Common myeloid progenitor, CD34-positive (primary cell): ENCODE measurements at regions of chr3 and their contacts with region 1.

Region 1: DNA sequence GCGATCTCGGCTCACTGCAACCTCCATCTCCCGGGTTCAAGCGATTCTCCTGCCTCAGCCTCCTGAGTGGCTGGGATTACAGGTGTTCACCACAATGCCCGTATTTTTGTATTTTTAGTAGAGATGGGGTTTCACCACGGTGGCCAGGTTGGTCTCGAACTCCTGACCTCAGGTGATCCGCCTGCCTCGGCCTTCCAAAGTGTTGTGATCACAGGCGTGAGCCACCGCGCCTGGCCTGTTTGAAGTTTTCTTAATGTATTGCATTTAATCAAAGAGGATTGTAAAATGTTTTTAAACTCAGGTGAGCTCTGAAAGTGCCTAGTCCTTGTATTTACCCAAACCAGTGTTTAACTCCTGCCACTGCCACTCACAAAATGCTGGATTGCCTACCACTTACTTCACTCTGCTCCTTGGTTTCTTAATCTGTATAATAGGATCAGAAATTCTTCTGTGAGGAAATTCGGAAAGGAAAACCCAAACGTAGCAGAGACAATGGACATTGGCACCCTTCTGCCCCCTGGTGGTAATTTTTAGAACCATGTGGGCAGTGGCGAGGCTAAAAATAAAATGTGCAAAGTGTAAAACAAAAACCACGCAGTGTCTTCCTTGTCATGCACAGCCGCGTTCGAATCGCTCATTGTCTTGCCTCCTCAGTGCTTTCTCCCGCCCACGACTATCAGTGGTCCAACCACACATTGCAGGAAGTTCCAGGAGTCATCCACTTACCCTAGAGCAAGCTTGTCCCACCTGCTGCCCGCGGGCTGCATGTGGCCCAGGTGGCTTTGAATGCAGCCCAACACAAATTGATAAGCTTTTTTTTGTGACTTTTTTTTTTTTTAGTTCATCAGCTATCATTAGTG is 27.3 kb downstream of the CEP19 start:
- DNase-seq: peak; percentile 67 to 88 (median 83)
- H3K4me3 ChIP-seq: peak overlapping the region in 4 of 7 experiments; percentile 13 to 62 (median 44)
- H3K27ac ChIP-seq: peak overlapping the region in 1 of 2 experiments; percentile 17
- H3K4me1 ChIP-seq: peaks cover 10 to 42% (median 24%) of the 10 kb centered on the region in 4 experiments
- H3K27me3 ChIP-seq: no peaks in the 10 kb centered on the region

Region 2: DNA sequence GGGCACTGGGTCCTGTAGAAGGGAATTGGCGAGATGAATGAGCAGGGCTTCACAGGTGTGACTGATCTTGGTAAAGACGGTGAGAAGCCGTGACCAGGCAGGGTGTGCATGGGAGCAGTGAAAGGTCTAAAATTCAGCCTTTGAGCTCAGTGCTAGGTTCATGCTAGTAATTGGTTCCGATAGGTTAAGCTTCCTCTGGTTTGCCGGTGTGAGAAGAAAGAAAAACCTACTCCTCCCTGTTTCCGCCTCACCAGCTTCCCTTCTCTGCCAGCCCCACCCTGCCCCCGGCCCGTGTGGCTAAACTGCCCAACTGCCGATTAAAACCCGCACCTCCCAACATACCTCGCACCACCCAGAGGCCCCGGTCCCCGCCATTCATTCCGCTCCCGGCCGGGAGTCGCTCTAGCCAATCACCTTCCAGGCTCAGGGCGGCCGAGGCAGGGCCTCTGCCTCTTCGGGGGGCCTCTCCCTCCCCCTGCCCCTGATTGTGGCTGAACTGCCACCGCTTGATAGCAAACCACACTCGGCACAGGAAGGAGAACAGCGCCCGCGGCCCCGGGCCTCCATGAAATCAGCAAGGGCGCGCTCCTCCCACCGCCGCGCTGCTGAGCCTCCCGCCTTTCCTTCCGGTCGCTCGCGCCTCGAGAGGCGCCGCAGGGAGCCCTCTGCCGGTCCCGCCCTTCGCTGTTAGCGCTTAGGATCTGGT is 52.6 kb before region 1 on chr3:
- CTCF ChIA-PET with region 1: interaction called, 35 read pairs
- POLR2A ChIA-PET with region 1: interaction called, 3 read pairs
- DNase-seq: peak; percentile 99 to 100 (median 100)
- H3K4me3 ChIP-seq: peak overlapping the region in 6 of 7 experiments; percentile 3 to 83 (median 77)
- H3K27ac ChIP-seq: peak overlapping the region; percentile 98 to 99
- H3K4me1 ChIP-seq: peaks cover 19 to 88% (median 76%) of the 10 kb centered on the region in 4 experiments
- H3K27me3 ChIP-seq: no peaks in the 10 kb centered on the region

Region 3: DNA sequence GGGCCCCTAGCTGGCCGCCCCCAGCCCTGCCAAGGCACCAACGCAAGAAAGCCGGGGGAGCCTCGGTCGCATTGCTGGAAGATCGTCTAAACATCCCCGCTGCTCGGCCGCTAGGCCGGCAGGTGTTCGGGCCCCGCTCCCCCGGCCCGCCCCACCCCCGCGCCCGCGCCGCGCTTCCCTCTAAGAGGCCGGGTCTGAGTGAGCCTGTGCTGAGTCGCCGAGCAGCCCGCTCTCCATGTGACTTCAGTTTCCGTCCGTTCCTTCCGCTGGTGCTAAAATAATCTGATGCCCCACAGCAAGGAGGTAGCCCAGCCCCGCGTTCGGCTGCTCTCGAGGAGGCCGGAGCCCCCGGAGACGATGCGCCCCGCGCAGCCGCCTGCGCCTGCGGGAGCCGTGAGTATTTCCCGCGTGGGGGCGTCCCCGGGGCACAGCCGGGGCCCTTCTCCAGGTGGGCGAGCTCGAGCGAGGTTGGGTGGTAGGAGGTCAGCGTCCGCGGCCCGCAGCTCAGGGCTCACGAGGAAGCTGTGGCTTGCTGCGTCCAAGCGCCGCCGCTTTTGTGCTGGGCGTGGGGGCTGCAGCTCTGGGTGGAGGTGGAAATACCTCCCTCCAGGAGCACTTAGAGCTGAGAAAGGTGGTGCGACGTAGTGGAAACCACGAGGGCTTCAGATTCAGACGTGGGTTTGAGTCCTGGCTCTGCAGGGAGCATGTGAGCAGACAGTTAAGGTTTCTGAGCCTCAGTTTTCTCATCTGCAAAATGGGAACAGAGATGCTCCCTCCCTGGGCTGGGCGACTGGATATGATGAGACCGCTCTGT is 45.1 kb before region 1 on chr3 and contains the start of gene NRROS:
- CTCF ChIA-PET with region 1: interaction called, 35 read pairs
- POLR2A ChIA-PET with region 1: no interaction called
- DNase-seq: peak; percentile 87 to 97 (median 95)
- H3K4me3 ChIP-seq: peak within 1 kb of the TSS; percentile 76 to 96 (median 91)
- H3K27ac ChIP-seq: peak within 1 kb of the TSS; percentile 85 to 89
- H3K4me1 ChIP-seq: peaks cover 29 to 91% (median 81%) of the 10 kb centered on the region in 4 experiments
- H3K27me3 ChIP-seq: no peaks in the 10 kb centered on the region

Region 4: GRCh38 chr3:196650740-196651311 is 34.0 kb before region 1 on chr3:
- CTCF ChIA-PET with region 1: interaction called, 23 read pairs
- POLR2A ChIA-PET with region 1: no interaction called
- DNase-seq: peak in 2 of 3 donors; percentile 54 to 62
- H3K4me3 ChIP-seq: no peak overlapping the region
- H3K27ac ChIP-seq: peak overlapping the region in 1 of 2 experiments; percentile 52
- H3K4me1 ChIP-seq: peaks cover 5 to 57% (median 47%) of the 10 kb centered on the region in 4 experiments
- H3K27me3 ChIP-seq: no peaks in the 10 kb centered on the region